GM13977 (cell line): ENCODE measurements at regions of chr5 and their contacts with region 1.

Region 1: DNA sequence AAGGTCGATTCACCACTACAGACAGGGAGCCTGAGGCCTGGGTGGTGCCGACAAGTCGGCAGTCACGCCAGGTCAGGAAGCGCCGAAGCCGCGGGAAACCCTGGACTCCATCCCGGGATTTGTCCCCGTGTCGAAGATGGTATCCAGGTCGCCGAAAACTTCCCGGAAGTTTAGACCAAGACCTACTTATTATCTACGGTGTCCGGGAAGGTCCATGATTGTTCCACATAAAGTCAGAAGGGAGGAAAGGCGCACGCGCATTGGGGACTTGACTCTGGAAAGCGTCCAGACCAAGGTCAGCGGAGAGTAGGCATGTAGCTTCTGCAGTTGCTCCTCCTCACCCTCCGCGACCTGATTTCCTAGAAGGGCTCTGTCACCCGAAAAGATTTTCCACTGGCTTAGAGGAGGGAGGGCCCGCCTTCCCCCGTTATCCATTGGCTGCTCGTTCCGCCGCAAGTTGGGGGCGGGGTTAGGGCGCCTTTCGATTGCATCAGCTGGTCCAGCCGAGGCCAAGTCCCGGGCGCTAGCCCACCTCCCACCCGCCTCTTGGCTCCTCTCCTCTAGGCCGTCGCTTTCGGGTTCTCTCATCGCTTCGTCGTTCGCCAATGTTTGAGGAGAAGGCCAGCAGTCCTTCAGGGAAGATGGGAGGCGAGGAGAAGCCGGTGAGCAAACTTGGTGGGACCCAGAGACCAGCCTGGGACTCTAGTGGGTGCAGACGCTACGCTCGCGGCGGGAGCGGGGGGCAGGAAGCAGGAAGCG is at the start of gene TARS1:
- DNase-seq: peak; percentile 93
- CTCF ChIP-seq: no peak

Region 2: GRCh38 chr5:33588654-33589372 is 148.2 kb after region 1 on chr5:
- in situ Hi-C with region 1: no loop called
- DNase-seq: peak; percentile 27
- CTCF ChIP-seq: peak; percentile 65

Region 3: DNA sequence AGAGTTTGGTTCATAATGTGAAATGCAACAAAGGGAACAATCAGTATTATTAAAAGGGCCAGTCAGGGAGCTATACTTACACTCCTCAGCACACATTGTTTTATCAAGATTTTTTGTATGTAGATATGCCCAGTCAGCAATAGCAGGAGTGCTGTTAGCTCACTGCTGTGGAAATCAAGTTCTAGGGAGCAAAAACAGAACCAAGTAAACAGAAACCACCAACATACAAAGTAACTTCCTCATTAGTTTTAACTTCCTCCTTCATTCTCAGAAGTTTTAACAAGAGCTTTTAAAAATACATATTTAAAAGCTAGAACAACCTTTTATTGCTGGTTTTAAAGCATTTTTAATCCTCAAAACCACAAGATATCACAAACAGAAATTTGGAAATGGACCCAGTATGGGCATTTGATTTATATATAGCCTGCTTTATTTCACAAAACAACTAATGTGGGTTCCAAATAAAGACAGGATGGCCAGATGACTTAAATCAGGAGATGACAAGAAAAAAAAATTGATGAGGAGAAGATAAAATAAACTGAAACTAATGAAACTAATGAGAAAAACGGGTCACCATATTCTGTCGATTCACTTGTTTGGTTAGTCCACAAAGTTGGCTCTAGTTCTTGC is 272.6 kb after region 1 on chr5:
- in situ Hi-C with region 1: no loop called
- DNase-seq: no peak
- CTCF ChIP-seq: no peak

Region 4: DNA sequence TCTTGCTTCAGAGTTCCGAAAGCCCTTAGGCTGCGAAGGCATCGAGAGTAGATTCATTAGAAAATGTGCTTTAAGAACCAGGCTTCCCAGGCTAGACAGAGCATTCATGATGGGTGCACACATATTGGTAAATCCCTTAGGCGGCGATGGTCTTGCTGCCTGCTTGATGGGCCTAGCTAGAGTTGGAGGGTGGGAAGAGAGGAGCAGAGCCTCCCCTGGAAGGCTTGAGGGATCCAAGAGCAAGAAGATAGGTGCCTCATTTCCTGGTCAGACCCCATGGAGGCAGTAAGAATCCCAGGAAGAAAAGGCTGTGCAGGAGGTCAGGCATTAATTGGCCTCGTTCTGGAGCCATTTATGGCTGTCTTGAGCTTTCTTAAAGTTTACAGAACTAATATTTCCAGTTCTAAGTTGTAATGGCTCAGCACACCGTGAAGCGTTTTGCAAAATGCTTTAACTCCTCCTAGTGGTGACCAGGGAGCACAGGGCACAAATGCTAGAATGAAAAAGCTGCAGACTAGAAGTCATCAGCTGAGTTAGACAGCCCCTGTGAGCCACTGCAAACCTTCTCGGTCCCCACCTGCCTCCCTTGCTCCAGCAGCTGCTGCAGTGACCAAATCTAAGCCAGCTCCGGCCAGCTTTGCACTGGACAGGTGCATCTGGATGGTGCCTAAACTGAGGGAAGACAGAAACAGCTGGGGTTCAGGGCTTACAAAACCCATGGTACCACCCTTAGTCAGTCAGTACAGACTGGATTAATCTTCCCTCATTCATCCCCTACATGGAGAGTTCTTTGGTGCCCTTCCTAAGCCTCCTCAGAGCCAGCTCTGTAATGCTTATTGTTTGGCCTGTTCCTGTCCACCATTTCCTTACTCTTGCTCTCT is 529.2 kb after region 1 on chr5:
- in situ Hi-C with region 1: loop called (anchors 25 kb)
- DNase-seq: peak; percentile 62
- CTCF ChIP-seq: peak; percentile 93

Region 5: DNA sequence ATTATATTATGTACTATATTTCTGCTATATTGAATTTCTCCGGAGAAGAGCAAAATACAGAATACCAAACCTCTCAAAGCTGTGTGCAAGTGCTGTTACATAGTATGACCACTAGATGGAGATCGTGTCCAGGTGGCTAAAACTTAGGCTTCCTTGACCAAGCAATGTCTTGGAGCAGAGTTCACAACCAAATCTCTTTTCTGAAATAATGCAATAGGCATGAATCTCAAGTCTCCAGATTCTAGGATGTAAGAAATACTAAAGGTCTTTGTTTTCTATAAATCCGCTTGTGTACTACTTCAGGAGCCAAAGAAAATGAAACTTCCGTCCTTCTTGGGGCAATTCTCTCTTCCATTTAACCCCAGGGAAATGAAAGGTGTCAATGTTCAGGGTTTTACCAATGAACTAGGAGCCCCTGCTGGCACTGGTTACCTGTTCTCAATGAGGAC is 1033.9 kb after region 1 on chr5:
- in situ Hi-C with region 1: loop called (anchors 25 kb)
- DNase-seq: no peak
- CTCF ChIP-seq: peak; percentile 81